ENCODE measurements at regions of chr19 and their contacts with region 1.

Region 1: DNA sequence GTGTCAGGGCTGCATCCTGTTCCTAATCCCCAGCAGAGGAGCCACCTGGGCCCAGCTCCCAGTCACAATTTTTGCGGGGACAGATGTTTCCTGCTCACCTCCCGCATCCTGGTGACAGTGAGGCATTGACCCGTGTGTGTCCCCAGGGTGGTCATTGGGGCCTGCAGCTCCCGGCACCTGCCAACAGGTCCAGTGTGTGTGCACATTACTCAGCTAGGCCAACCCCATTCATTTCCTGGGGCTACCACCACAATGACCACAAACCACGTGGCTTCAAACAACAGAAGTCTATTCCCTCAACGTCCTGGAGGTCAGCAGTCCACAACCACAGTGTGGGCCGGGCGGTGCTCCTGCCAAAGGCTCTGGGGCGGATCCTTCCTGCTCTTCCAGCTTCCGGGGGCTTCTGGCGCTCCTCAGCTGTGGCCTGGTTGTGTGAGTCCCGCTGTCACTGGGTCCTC is 11.9 kb upstream of the F2RL3 start:
- DNase-seq: no peak
- H3K4me3 ChIP-seq: no peak overlapping the region
- H3K27ac ChIP-seq: no peak overlapping the region
- H3K27me3 ChIP-seq: no peaks in the 10 kb centered on the region
- CTCF ChIP-seq: no peak

Region 2: GRCh38 chr19:16860118-16860517 is 16.8 kb before region 1 on chr19:
- intact Hi-C with region 1: loop called in 1 of 2 experiments (anchors 1 kb)
- DNase-seq: no peak
- H3K4me3 ChIP-seq: no peak overlapping the region
- H3K27ac ChIP-seq: no peak overlapping the region
- H3K27me3 ChIP-seq: no peaks in the 10 kb centered on the region
- CTCF ChIP-seq: no peak

Region 3: DNA sequence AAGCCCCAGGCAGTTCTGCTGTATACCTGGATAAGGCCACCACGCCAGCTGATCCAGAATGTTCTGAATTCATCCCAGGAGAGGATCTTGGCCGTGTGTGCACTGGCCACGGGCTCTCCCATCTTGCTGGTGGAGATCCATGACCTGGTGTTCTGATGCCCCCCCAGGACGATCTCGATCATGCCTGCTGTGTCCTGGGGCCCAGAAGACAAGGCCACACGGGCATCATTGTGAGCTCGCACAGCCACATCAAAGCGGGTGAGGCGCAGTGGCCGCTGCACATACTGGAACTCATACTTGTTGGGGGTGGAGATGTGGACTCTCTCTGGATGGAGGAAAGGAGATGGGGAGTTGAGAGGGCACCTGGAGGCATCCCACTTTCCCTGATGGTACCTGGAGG is 52.0 kb after region 1 on chr19:
- intact Hi-C with region 1: no loop called
- DNase-seq: peak in 1 of 10 donors; percentile 10
- H3K4me3 ChIP-seq: no peak overlapping the region
- H3K27ac ChIP-seq: no peak overlapping the region
- H3K27me3 ChIP-seq: peaks cover 0 to under 1% (median 0%) of the 10 kb centered on the region in 45 donors
- CTCF ChIP-seq: no peak